ENCODE measurements at regions of chr6 and their contacts with region 1.

Region 1: DNA sequence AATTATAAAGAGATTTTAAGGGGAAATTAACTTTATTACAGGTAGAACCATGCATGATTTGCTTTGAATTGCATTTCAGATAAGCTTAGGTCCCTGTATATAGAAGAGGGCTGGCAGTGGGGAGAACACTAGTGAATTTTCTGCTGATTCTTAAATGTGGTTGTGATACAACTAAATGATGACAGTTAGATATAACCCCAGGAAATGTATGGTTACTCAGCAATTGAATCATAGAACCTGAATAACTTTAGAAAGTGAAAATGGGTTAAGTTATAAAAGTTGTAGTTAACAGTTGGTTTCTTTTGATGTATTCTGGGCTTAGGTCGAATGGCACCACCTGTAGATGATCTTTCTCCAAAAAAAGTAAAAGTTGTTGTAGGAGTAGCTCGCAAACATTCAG is 70.1 kb downstream of the PHF3 start:
- DNase-seq: no peak
- ATAC-seq: no peak
- H3K4me3 ChIP-seq: no peak overlapping the region
- H3K27ac ChIP-seq: no peak overlapping the region
- H3K4me1 ChIP-seq: no peaks in the 10 kb centered on the region
- H3K27me3 ChIP-seq: no peaks in the 10 kb centered on the region

Region 2: GRCh38 chr6:63571881-63572732 is 133.6 kb before region 1 on chr6 and contains the starts of genes LOC128125822 and PTP4A1:
- intact Hi-C with region 1: loop called in 1 of 2 experiments (anchors 5 kb)
- DNase-seq: peak; percentile 99
- ATAC-seq: peak; percentile 99
- H3K4me3 ChIP-seq: peak within 1 kb of the TSS; percentile 76 to 90
- H3K27ac ChIP-seq: peak within 1 kb of the TSS; percentile 77 to 93
- H3K4me1 ChIP-seq: no peaks in the 10 kb centered on the region
- H3K27me3 ChIP-seq: no peaks in the 10 kb centered on the region
- total RNA-seq, gene PTP4A1: 27.0 to 34.3 TPM

Region 3: GRCh38 chr6:63783096-63783495 is 77.4 kb after region 1 on chr6:
- intact Hi-C with region 1: no loop called
- DNase-seq: no peak
- ATAC-seq: no peak
- H3K4me3 ChIP-seq: no peak overlapping the region
- H3K27ac ChIP-seq: no peak overlapping the region
- H3K4me1 ChIP-seq: no peaks in the 10 kb centered on the region
- H3K27me3 ChIP-seq: no peaks in the 10 kb centered on the region

Region 4: DNA sequence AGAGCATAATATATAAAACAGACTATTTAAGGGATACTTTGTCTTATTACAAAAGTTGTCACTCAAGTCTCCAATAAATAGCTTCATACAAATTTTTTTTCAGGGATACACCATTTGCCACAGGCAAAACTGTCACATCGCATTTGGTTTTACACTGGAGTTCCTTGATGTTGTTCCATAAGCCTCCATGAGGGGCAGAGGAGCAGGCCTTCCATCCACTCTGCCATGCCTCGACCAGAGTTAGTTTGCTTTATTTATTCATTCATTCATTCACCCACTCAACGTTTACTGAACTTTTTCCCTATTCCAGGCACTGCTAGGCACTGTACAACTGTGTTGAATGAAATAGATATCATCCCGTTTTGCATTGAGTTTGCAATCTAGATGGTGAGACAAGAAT is 176.5 kb after region 1 on chr6:
- intact Hi-C with region 1: no loop called
- DNase-seq: no peak
- ATAC-seq: no peak
- H3K4me3 ChIP-seq: no peak overlapping the region
- H3K27ac ChIP-seq: no peak overlapping the region
- H3K4me1 ChIP-seq: no peaks in the 10 kb centered on the region
- H3K27me3 ChIP-seq: no peaks in the 10 kb centered on the region

Measured in aorta (tissue), 5 donors.